CD4-positive, alpha-beta memory T cell (primary cell): ENCODE measurements at regions of chr1 and their contacts with region 1.

Region 1: GRCh38 chr1:234925440-234926263 is 203.0 kb downstream of the TOMM20 start:
- DNase-seq: peak in 4 of 5 donors; percentile 33 to 55 (median 46)
- H3K4me3 ChIP-seq: peak overlapping the region; percentile 27 to 48
- H3K4me3 Mint-ChIP-seq: peak overlapping the region; percentile 73 to 92 (median 84)
- H3K27ac ChIP-seq: no peak overlapping the region
- H3K27ac Mint-ChIP-seq: peak overlapping the region; percentile 85 to 99 (median 92)
- H3K4me1 ChIP-seq: peaks cover 49% of the 10 kb centered on the region
- H3K4me1 Mint-ChIP-seq: peaks cover 31 to 49% (median 43%) of the 10 kb centered on the region in 4 donors
- H3K27me3 ChIP-seq: no peaks in the 10 kb centered on the region
- H3K27me3 Mint-ChIP-seq: no peaks in the 10 kb centered on the region

Region 2: DNA sequence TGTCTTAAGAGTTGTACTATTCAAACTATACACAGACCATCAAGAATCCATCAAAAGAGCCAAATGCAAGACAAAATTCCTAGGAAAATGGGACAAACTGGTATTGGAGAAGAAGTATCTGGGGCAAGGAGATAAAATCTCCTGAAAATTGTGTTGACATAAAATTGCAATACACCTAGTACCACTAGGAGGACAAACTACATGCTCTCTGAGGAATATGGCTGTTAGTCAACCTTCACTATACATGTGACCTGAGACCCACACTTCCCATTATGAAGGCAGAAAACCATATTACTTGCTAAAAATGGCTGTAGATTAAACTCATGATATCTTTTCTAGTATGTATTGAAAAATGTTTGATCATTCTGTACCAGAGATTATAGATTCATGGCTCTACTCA is 345.7 kb before region 1 on chr1:
- CTCF ChIA-PET with region 1: no interaction called
- POLR2A ChIA-PET with region 1: no interaction called
- intact Hi-C with region 1: no loop called
- DNase-seq: no peak
- H3K4me3 ChIP-seq: no peak overlapping the region
- H3K4me3 Mint-ChIP-seq: no peak overlapping the region
- H3K27ac ChIP-seq: no peak overlapping the region
- H3K27ac Mint-ChIP-seq: no peak overlapping the region
- H3K4me1 ChIP-seq: no peaks in the 10 kb centered on the region
- H3K4me1 Mint-ChIP-seq: peaks cover 0 to 2% (median 0%) of the 10 kb centered on the region in 4 donors
- H3K27me3 ChIP-seq: no peaks in the 10 kb centered on the region
- H3K27me3 Mint-ChIP-seq: peaks cover 1 to 4% of the 10 kb centered on the region in 2 donors

Region 3: GRCh38 chr1:234842726-234843641 is 82.7 kb before region 1 on chr1:
- CTCF ChIA-PET with region 1: no interaction called
- POLR2A ChIA-PET with region 1: interaction called, 11 read pairs
- intact Hi-C with region 1: no loop called
- DNase-seq: peak; percentile 34 to 76 (median 44)
- H3K4me3 ChIP-seq: peak overlapping the region in 1 of 2 donors; percentile 28
- H3K4me3 Mint-ChIP-seq: peak overlapping the region; percentile 33 to 83 (median 58)
- H3K27ac ChIP-seq: peak overlapping the region; percentile 39
- H3K27ac Mint-ChIP-seq: peak overlapping the region; percentile 76 to 91 (median 83)
- H3K4me1 ChIP-seq: peaks cover 65% of the 10 kb centered on the region
- H3K4me1 Mint-ChIP-seq: peaks cover 47 to 73% (median 60%) of the 10 kb centered on the region in 4 donors
- H3K27me3 ChIP-seq: no peaks in the 10 kb centered on the region
- H3K27me3 Mint-ChIP-seq: no peaks in the 10 kb centered on the region

Region 4: DNA sequence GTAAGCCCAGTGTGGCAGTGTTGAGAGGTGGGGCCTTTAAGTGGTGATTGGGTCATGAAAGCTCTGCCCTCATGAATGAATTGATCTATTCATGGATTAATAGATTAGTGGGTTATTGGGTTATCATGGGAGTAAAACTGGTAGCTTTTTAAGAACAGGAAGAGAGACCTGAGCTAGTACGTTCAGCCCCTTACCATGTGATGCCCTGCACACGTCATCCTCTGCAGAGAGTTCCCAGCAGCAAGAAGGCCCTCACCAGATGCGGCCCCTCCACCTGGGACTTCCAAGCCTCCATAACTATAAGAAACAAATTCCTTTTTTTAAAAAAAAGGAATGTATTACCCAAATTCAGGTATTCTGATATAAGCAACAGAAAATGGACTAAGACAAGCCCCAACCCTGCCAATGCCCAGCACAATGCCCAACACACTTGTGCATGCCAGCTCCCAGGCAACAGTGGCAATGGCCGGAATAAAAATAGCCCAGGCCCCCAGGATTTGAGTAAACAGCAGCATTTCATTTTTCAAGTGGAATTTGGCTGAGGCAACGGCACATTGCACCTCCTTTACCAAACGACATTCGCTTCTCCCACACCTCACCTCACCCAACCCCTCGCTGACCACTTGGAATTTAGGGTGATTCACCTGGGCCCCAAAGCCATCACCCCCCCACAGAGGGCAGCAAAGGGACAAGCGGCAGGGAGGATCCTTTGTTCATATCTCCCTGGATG is 12.9 kb before region 1 on chr1:
- CTCF ChIA-PET with region 1: interaction called, 3 read pairs
- POLR2A ChIA-PET with region 1: interaction called, 28 read pairs
- intact Hi-C with region 1: no loop called
- DNase-seq: peak in 2 of 5 donors; percentile 11 to 16
- H3K4me3 ChIP-seq: no peak overlapping the region
- H3K4me3 Mint-ChIP-seq: peak overlapping the region in 4 of 8 donors; percentile 17 to 73 (median 52)
- H3K27ac ChIP-seq: no peak overlapping the region
- H3K27ac Mint-ChIP-seq: peak overlapping the region; percentile 68 to 95 (median 93)
- H3K4me1 ChIP-seq: peaks cover 29% of the 10 kb centered on the region
- H3K4me1 Mint-ChIP-seq: peaks cover 24 to 48% (median 33%) of the 10 kb centered on the region in 4 donors
- H3K27me3 ChIP-seq: no peaks in the 10 kb centered on the region
- H3K27me3 Mint-ChIP-seq: no peaks in the 10 kb centered on the region

Region 5: DNA sequence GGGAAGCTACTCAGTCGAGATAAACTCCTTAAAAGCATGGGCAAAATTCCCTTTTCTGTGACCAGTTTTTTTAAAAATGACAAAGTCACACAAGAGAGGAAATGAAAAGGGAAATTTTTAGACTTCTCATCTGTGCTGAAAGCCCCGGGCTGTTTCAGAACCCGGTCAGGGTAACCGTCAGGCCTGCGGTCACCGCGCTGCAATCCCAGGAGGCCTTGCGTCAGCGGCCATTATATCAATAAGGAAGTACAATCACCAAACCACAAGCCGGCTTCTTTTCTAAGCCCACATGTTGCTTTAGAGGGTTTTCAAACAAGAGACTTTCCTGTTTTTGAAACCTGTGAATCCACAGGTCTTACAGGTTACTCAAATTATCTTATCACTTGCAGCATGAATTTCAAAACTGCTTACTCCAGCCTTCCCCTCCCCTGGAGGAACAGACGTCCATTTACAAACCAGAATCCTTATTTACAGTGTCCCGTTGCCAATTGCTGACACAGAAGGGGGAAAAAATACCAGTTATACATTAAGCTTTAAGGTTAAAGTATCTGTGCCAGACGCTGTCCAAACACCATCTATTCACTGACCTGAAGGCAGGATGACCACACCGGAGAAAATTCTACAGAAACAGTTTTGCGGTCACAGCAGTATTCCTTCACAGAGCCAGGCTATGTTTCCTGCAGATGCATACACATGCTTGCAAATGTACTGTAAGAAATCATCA is 37.7 kb after region 1 on chr1:
- CTCF ChIA-PET with region 1: interaction called, 4 read pairs
- POLR2A ChIA-PET with region 1: interaction called, 18 read pairs
- intact Hi-C with region 1: loop called (anchors 5 kb)
- DNase-seq: peak; percentile 85 to 94 (median 86)
- H3K4me3 ChIP-seq: peak overlapping the region; percentile 14 to 46
- H3K4me3 Mint-ChIP-seq: peak overlapping the region; percentile 41 to 89 (median 84)
- H3K27ac ChIP-seq: peak overlapping the region; percentile 89
- H3K27ac Mint-ChIP-seq: peak overlapping the region; percentile 90 to 98 (median 96)
- H3K4me1 ChIP-seq: peaks cover 72% of the 10 kb centered on the region
- H3K4me1 Mint-ChIP-seq: peaks cover 58 to 76% (median 64%) of the 10 kb centered on the region in 4 donors
- H3K27me3 ChIP-seq: no peaks in the 10 kb centered on the region
- H3K27me3 Mint-ChIP-seq: no peaks in the 10 kb centered on the region

Region 6: DNA sequence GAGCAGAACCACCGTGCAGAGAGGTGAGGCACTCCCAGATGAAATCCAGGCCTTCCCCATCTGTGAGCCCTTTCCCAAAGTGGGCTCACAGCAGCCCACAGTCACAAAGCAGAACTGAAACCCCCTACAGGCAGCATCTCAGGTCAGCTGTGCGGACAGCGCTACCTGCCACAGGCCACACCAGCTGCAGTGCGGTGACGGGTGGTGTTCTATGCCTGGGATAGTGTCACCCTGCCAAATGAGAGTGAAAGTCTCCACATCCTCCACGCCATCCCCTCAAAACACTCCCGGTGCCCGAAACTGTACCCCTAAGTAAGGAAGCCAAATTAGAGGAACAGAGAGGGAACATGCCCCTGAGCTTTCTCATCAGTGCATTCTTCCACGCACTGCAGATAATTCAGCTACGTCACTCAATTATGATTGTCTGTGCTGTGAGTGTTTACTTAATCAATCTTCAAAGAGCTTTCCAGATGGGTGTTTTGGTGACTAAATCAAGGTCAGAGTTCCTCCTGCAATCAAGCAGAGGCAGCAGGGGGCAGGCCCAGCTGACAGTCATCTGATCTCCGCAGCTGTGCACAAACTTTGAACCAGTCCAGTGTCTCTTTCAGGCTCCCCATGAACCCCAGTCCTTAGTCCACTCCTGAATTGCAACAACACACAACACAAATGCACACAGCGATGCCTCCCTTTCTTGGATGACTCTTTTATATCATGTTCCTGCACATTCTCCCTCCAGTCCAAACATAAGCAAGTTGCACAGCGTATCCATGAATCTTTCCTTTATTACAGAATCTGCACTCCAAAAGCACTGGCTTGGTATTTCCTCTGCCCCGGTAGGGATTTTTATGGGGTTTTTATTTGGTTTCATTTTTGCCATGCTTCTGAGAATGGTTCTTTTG is 53.0 kb after region 1 on chr1:
- CTCF ChIA-PET with region 1: interaction called, 3 read pairs
- POLR2A ChIA-PET with region 1: interaction called, 36 read pairs
- intact Hi-C with region 1: no loop called
- DNase-seq: peak; percentile 72 to 87 (median 77)
- H3K4me3 ChIP-seq: peak overlapping the region in 1 of 2 donors; percentile 33
- H3K4me3 Mint-ChIP-seq: peak overlapping the region; percentile 43 to 93 (median 79)
- H3K27ac ChIP-seq: peak overlapping the region; percentile 88
- H3K27ac Mint-ChIP-seq: peak overlapping the region; percentile 96 to 99 (median 97)
- H3K4me1 ChIP-seq: peaks cover 65% of the 10 kb centered on the region
- H3K4me1 Mint-ChIP-seq: peaks cover 40 to 83% (median 53%) of the 10 kb centered on the region in 4 donors
- H3K27me3 ChIP-seq: no peaks in the 10 kb centered on the region
- H3K27me3 Mint-ChIP-seq: no peaks in the 10 kb centered on the region